PC-9 (cell line): ENCODE measurements at regions of chr19 and their contacts with region 1.

Region 1: DNA sequence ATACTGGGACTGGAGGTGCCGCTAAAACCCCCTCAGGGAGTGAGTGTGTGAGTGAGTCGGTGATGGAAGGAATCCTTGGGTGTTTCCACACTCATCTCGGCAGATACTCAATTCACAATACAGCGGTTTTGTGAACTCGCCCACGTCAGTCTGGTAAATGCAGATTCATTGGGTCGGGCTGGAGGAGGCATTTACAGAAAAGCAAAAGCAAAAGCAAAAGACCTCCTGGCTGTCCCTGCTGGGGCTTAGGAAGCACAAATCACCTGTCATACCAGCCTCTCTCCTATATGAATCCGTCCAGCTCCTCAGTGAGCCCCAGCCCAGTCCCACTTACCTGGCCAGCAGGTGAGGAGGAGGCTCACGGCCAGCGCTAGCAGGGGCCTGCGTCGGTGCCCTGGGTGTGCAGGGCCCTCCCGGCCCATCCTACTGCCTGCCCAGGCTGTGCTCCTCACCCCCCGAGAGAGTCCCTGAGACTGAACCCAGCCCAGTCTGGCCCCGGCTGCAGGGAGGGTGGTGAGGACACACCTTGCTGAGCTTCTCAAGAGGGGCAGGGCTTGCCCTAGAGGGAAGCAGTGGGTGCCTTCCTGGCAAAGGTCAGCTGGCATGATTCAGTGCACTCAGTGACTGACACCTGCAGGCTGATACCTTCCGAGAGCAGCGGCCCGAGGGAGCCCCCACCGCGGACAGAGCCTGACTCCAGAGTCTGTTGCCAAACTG is at the start of gene MUC16:
- DNase-seq: peak; percentile 88 to 89
- H3K4me3 ChIP-seq: peak within 1 kb of the TSS; percentile 80
- H3K27ac ChIP-seq: peak within 1 kb of the TSS; percentile 67
- H3K4me1 ChIP-seq: peaks cover 33% of the 10 kb centered on the region
- H3K27me3 ChIP-seq: no peaks in the 10 kb centered on the region
- CTCF ChIP-seq: peak; percentile 3; the same call in 1 of the 2 replicates
- total RNA-seq, gene MUC16: 75.0 and 85.0 TPM in 2 replicates

Region 2: GRCh38 chr19:7953576-7953975 is 1056.5 kb before region 1 on chr19:
- CTCF ChIA-PET with region 1: no interaction called
- POLR2A ChIA-PET with region 1: interaction called, 15 read pairs
- intact Hi-C with region 1: no loop called
- DNase-seq: no peak
- H3K4me3 ChIP-seq: no peak overlapping the region
- H3K27ac ChIP-seq: no peak overlapping the region
- H3K4me1 ChIP-seq: no peaks in the 10 kb centered on the region
- H3K27me3 ChIP-seq: no peaks in the 10 kb centered on the region
- CTCF ChIP-seq: no peak

Region 3: DNA sequence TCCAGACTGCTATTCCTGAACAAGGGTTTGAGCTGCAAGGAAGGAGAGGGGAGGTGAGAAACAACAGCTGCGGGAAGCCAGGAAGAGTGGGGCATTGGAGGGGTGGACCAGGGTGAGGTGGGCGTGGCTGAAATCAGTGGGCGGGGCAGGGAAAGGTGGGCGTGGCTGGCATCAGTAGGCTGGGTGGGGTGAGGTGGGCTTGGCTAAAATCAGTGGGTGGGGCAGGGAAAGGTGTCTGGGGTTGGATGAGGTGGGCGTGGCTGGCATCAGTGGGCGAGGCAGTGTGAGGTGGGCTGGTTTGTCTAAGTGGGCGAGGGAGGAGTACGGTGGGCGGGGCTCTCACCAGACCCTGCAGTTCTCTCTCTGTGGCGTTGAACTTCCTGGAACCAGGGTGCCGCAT is 87.5 kb before region 1 on chr19:
- CTCF ChIA-PET with region 1: no interaction called
- POLR2A ChIA-PET with region 1: no interaction called
- intact Hi-C with region 1: no loop called
- DNase-seq: peak in 1 of 2 experiments; percentile 23
- H3K4me3 ChIP-seq: no peak overlapping the region
- H3K27ac ChIP-seq: no peak overlapping the region
- H3K4me1 ChIP-seq: no peaks in the 10 kb centered on the region
- H3K27me3 ChIP-seq: no peaks in the 10 kb centered on the region
- CTCF ChIP-seq: no peak

Region 4: DNA sequence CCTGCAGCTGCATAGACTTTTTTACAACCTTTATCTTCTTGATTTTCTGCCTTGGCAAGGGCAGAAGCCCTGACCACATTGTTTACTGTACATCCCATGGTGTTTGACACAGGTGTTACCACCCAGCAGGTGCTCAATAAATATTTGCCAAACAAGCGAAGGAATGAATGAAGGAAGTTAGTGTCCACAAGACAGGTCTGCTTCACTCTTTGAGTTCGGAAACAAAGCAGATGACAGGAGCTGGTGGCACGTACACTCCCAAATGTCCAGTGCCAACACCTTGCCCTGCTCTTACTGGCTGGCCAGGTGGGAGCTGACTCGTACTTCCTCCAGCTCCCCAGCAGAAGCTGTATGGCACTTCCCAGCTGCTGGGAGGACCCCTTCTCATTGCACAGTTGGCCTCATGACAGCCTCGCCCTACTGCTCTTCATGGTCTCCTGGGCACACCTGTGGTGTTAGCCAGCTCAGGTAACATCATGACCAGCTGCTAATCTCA is 22.1 kb after region 1 on chr19:
- CTCF ChIA-PET with region 1: no interaction called
- POLR2A ChIA-PET with region 1: interaction called, 17 read pairs
- intact Hi-C with region 1: loop called (anchors 1 kb)
- DNase-seq: peak; percentile 81 to 100
- H3K4me3 ChIP-seq: no peak overlapping the region
- H3K27ac ChIP-seq: peak overlapping the region; percentile 52
- H3K4me1 ChIP-seq: peaks cover 27% of the 10 kb centered on the region
- H3K27me3 ChIP-seq: no peaks in the 10 kb centered on the region
- CTCF ChIP-seq: no peak

Region 5: DNA sequence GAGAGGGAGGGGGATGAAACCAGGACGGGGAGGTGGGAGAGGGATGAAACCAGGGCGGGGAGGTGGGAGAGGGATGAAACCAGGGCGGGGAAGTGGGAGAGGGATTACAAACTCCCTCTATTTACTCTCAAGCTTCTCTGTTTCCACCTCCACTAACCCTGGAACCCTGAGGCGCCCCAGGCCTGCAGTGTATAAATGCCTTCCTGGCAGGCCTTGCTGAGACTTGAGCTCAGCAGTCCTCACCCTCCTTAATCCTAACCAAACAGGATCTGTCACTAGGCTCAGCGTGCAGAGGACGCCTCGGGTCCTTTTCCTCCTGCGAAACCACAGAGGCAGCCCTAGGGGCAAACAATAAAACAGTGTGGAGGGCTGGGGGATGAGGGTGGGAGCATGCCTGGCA is 44.7 kb after region 1 on chr19:
- CTCF ChIA-PET with region 1: no interaction called
- POLR2A ChIA-PET with region 1: interaction called, 9 read pairs
- intact Hi-C with region 1: loop called (anchors 1 kb)
- DNase-seq: peak; percentile 90 to 98
- H3K4me3 ChIP-seq: peak overlapping the region; percentile 35; the same call in 1 of the 2 replicates
- H3K27ac ChIP-seq: peak overlapping the region; percentile 92
- H3K4me1 ChIP-seq: peaks cover 73% of the 10 kb centered on the region
- H3K27me3 ChIP-seq: no peaks in the 10 kb centered on the region
- CTCF ChIP-seq: no peak